Cardiac septum (tissue), 1 donor: ENCODE measurements at regions of chr18 and their contacts with region 1.

Region 1: GRCh38 chr18:28071199-28071598 is 105.7 kb downstream of the CDH2 start:
- DNase-seq: no peak

Region 2: GRCh38 chr18:28032177-28032576 is 39.0 kb before region 1 on chr18:
- intact Hi-C with region 1: loop called (anchors 5 kb)
- DNase-seq: no peak

Region 3: DNA sequence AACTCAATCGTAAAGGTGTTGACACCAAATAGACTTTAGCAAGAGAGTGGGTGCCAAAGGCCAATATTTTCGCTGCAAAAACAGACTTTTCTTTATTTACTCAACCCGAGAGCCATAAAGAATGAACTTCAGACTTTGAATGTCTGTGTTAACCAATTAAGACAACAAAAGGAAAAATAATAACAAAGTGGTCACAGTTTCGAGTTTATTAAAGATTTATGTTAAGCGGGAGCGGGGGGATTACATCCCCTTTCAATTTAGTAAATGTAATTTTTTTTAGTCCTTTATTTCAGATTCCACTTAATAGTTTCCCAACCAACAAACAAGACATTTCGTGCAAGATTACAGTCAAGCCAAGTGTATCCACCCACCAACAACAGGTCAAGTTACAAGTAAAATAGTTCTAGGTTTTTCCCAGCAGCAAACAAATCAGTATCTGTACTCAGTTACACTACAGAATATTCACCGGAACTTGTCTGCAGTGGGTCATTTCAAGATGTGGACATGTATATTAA is 96.7 kb after region 1 on chr18:
- intact Hi-C with region 1: no loop called
- DNase-seq: no peak